Activated naive CD4-positive, alpha-beta T cell treated with anti-CD3 and anti-CD28 coated beads for 36 hours (primary cell): ENCODE measurements at regions of chr2 and their contacts with region 1.

Region 1: GRCh38 chr2:207223051-207223450 is 57.3 kb upstream of the KLF7 start:
- DNase-seq: peak; percentile 50
- H3K4me3 Mint-ChIP-seq: no peak overlapping the region
- H3K27ac Mint-ChIP-seq: peak overlapping the region; percentile 32
- H3K4me1 Mint-ChIP-seq: peaks cover 43% of the 10 kb centered on the region
- H3K27me3 Mint-ChIP-seq: no peaks in the 10 kb centered on the region

Region 2: DNA sequence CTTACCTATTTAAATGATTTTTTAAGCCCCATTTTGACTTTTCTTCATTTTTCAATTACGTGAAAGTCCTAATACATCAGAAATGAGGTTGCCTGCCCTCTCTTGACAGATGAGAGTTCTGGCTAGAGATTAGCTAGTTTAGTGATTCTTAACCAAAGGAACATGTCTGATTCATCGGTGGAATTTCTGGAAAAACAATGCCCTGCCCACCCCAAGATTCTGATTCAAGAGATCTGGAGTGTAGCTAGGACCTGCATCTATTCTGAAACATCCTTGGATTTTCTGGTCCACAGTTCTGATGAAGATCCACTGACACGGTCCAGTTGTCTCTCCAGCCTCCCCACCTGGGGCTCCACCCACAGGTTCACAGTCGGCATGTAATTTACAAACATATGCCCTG is 168.5 kb before region 1 on chr2:
- CTCF ChIA-PET with region 1: no interaction called
- intact Hi-C with region 1: no loop called
- DNase-seq: no peak
- H3K4me3 Mint-ChIP-seq: no peak overlapping the region
- H3K27ac Mint-ChIP-seq: no peak overlapping the region
- H3K4me1 Mint-ChIP-seq: no peaks in the 10 kb centered on the region
- H3K27me3 Mint-ChIP-seq: no peaks in the 10 kb centered on the region

Region 3: DNA sequence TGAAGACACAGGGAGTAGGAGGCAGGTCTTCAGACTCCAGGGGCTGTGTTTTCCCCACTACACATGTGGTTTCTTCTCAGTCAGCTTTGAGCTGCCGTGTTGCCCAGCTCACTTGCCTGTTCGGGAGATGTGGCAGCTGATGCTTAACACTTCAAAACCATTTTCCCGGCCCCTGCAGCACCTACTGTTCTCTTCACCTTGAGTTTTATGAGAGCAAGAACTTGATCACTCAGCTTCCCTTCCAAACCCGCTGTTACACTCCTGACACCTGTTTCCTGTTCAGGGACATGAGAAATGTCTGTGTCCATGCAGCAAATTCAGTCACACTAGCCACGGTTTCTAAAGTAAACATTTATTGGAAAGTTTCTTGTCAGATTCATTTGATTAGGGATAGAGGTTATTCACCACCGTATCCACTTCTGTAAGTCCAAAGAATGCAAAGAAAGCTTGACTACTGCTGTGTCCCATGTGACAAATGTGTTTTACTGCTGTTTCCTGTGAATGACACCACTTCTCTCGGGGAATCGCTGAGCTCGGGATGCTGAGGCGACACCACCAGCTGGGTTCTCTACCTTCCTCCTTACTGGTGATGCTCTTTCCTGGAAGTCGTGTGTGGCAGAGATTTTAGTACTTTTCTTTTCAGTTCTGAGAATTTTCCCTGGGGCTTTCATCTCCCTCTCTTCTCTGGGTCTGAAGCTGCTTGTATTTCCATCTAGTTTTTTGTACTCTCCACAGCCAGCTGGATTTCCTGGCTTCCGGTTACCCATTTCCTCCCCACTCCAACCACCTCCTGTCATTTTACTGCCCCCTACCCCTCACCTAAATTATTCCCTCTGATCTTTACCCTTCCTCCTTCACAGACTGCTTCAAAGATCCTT is 149.0 kb before region 1 on chr2:
- CTCF ChIA-PET with region 1: interaction called, 3 read pairs
- intact Hi-C with region 1: loop called (anchors 2 kb)
- DNase-seq: peak; percentile 72
- H3K4me3 Mint-ChIP-seq: peak overlapping the region; percentile 64
- H3K27ac Mint-ChIP-seq: peak overlapping the region; percentile 85
- H3K4me1 Mint-ChIP-seq: peaks cover 27% of the 10 kb centered on the region
- H3K27me3 Mint-ChIP-seq: no peaks in the 10 kb centered on the region

Region 4: GRCh38 chr2:207173660-207174059 is 49.4 kb before region 1 on chr2:
- CTCF ChIA-PET with region 1: no interaction called
- intact Hi-C with region 1: loop called (anchors 2 kb)
- DNase-seq: no peak
- H3K4me3 Mint-ChIP-seq: no peak overlapping the region
- H3K27ac Mint-ChIP-seq: no peak overlapping the region
- H3K4me1 Mint-ChIP-seq: peaks cover 14% of the 10 kb centered on the region
- H3K27me3 Mint-ChIP-seq: no peaks in the 10 kb centered on the region

Region 5: DNA sequence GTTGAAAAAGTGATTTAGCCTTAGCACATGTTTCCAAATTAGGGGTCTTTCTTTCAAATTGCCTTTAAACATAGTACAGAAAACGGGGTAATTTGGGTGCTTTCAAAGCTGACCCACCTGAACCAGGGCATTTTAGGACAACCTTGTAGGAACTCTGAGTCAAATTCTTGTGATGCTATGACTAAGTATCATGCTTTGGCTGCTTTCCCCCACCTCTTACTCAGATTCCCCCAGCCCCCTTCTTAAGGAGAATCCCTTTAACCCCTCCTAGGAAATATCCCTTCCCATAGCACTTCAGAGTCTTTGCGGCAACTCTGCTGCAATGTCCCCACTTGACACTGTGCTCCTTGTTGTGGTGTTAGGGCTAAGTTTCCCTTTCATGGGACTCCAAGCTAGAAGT is 38.7 kb before region 1 on chr2:
- CTCF ChIA-PET with region 1: no interaction called
- intact Hi-C with region 1: loop called (anchors 2 kb)
- DNase-seq: no peak
- H3K4me3 Mint-ChIP-seq: no peak overlapping the region
- H3K27ac Mint-ChIP-seq: no peak overlapping the region
- H3K4me1 Mint-ChIP-seq: peaks cover 5% of the 10 kb centered on the region
- H3K27me3 Mint-ChIP-seq: no peaks in the 10 kb centered on the region

Region 6: GRCh38 chr2:207238831-207239701 is 16.0 kb after region 1 on chr2:
- CTCF ChIA-PET with region 1: interaction called, 4 read pairs
- intact Hi-C with region 1: loop called (anchors 1 kb)
- DNase-seq: peak; percentile 73
- H3K4me3 Mint-ChIP-seq: no peak overlapping the region
- H3K27ac Mint-ChIP-seq: peak overlapping the region; percentile 2
- H3K4me1 Mint-ChIP-seq: peaks cover 30% of the 10 kb centered on the region
- H3K27me3 Mint-ChIP-seq: no peaks in the 10 kb centered on the region

Region 7: GRCh38 chr2:207288628-207289027 is 65.6 kb after region 1 on chr2:
- CTCF ChIA-PET with region 1: no interaction called
- intact Hi-C with region 1: no loop called
- DNase-seq: peak; percentile 84
- H3K4me3 Mint-ChIP-seq: no peak overlapping the region
- H3K27ac Mint-ChIP-seq: peak overlapping the region; percentile 33
- H3K4me1 Mint-ChIP-seq: peaks cover 73% of the 10 kb centered on the region
- H3K27me3 Mint-ChIP-seq: no peaks in the 10 kb centered on the region

Region 8: GRCh38 chr2:207311316-207312005 is 88.4 kb after region 1 on chr2:
- CTCF ChIA-PET with region 1: no interaction called
- intact Hi-C with region 1: loop called (anchors 1 kb)
- DNase-seq: peak; percentile 78
- H3K4me3 Mint-ChIP-seq: peak overlapping the region; percentile 13
- H3K27ac Mint-ChIP-seq: peak overlapping the region; percentile 78
- H3K4me1 Mint-ChIP-seq: peaks cover 22% of the 10 kb centered on the region
- H3K27me3 Mint-ChIP-seq: peaks cover 4% of the 10 kb centered on the region

Region 9: GRCh38 chr2:207459990-207460757 is 237.1 kb after region 1 on chr2:
- CTCF ChIA-PET with region 1: no interaction called
- intact Hi-C with region 1: no loop called
- DNase-seq: no peak
- H3K4me3 Mint-ChIP-seq: no peak overlapping the region
- H3K27ac Mint-ChIP-seq: no peak overlapping the region
- H3K4me1 Mint-ChIP-seq: peaks cover 13% of the 10 kb centered on the region
- H3K27me3 Mint-ChIP-seq: no peaks in the 10 kb centered on the region

Region 10: GRCh38 chr2:207546822-207547221 is 323.8 kb after region 1 on chr2:
- CTCF ChIA-PET with region 1: no interaction called
- intact Hi-C with region 1: no loop called
- DNase-seq: no peak
- H3K4me3 Mint-ChIP-seq: no peak overlapping the region
- H3K27ac Mint-ChIP-seq: no peak overlapping the region
- H3K4me1 Mint-ChIP-seq: peaks cover 67% of the 10 kb centered on the region
- H3K27me3 Mint-ChIP-seq: no peaks in the 10 kb centered on the region